ENCODE measurements at regions of chr10 and their contacts with region 1.

Region 1: GRCh38 chr10:115956235-115957011 is 316.6 kb downstream of the GFRA1 start:
- DNase-seq: no peak
- H3K4me3 ChIP-seq: no peak overlapping the region
- H3K27ac ChIP-seq: no peak overlapping the region
- H3K4me1 ChIP-seq: peaks cover 12% of the 10 kb centered on the region
- H3K27me3 ChIP-seq: no peaks in the 10 kb centered on the region
- CTCF ChIP-seq: no peak
- POLR2A ChIP-seq: no peak

Region 2: GRCh38 chr10:115879372-115880044 is 76.9 kb before region 1 on chr10:
- CTCF ChIA-PET with region 1: no interaction called
- POLR2A ChIA-PET with region 1: no interaction called
- dilution Hi-C with region 1: no loop called
- intact Hi-C with region 1: no loop called
- DNase-seq: no peak
- H3K4me3 ChIP-seq: no peak overlapping the region
- H3K27ac ChIP-seq: no peak overlapping the region
- H3K4me1 ChIP-seq: no peaks in the 10 kb centered on the region
- H3K27me3 ChIP-seq: no peaks in the 10 kb centered on the region
- CTCF ChIP-seq: no peak
- POLR2A ChIP-seq: no peak

Region 3: DNA sequence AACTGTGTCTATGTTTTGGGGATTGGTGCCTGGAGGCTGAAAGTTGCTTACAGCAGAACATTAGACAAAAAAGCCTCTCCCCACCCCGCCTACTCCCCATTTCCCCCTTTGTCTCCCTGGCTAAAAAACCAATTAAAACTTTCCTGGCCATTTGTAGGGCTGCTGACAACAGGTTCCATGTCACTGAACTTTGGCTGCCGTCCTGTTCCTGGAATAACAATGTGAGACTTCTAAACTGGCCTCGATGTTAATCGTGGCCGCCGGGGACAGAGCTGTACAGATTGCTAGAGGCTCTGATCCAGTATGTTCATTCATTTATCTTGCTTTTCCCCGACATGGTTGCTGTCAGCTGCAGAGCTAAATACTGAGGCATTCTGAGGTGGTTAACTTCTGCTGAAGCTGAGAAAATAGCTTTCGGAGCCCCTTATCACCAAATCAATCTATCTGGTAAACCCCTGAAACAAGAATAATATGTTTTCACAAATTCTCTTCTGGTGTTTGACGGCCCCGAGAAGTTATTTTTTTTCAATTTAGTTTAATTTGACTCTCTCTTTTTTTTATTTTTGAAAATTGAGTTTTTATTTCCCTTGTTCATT is 44.9 kb after region 1 on chr10:
- CTCF ChIA-PET with region 1: no interaction called
- POLR2A ChIA-PET with region 1: interaction called, 12 read pairs
- dilution Hi-C with region 1: no loop called
- intact Hi-C with region 1: no loop called
- DNase-seq: no peak
- H3K4me3 ChIP-seq: no peak overlapping the region
- H3K27ac ChIP-seq: no peak overlapping the region
- H3K4me1 ChIP-seq: no peaks in the 10 kb centered on the region
- H3K27me3 ChIP-seq: no peaks in the 10 kb centered on the region
- CTCF ChIP-seq: no peak
- POLR2A ChIP-seq: no peak

Region 4: DNA sequence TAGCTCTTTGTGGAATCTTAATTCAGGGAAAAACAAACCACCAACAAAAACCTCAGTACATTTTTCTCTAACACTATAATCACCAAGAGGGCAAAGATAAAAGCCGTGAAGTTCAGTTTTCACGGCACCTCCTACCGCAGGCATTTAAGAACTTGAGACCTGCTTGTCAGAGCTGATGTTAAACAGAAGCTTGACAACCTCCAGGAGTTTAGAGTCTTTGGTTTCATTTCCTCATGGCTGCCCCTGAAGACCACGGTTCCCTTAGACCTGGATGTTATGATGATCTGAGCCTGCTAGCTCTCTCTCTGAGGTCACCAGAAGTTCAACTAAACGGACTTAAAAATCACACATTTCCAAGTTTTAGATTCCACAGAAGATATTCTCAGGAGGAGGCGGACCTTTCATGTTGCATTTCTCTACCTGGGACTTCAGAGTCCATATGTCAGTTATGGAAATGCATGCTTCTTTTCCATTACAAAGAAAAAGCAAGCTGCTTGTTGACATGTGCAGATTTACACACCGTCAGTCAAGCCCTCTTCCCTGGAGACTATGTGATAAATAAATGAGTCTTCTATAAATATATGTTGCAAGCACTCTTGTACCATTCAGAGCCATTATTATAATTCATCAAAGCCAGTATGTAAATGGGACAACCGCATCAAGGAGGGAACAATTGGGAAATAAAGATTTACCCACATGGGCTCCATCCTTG is 58.6 kb after region 1 on chr10:
- CTCF ChIA-PET with region 1: no interaction called
- POLR2A ChIA-PET with region 1: no interaction called
- dilution Hi-C with region 1: no loop called
- intact Hi-C with region 1: no loop called
- DNase-seq: no peak
- H3K4me3 ChIP-seq: no peak overlapping the region
- H3K27ac ChIP-seq: no peak overlapping the region
- H3K4me1 ChIP-seq: no peaks in the 10 kb centered on the region
- H3K27me3 ChIP-seq: no peaks in the 10 kb centered on the region
- CTCF ChIP-seq: no peak
- POLR2A ChIP-seq: no peak

Region 5: GRCh38 chr10:116132780-116133399 is 176.5 kb after region 1 on chr10:
- CTCF ChIA-PET with region 1: no interaction called
- POLR2A ChIA-PET with region 1: no interaction called
- dilution Hi-C with region 1: no loop called
- intact Hi-C with region 1: no loop called
- DNase-seq: no peak
- H3K4me3 ChIP-seq: no peak overlapping the region
- H3K27ac ChIP-seq: no peak overlapping the region
- H3K4me1 ChIP-seq: no peaks in the 10 kb centered on the region
- H3K27me3 ChIP-seq: no peaks in the 10 kb centered on the region
- CTCF ChIP-seq: no peak
- POLR2A ChIP-seq: no peak

Region 6: DNA sequence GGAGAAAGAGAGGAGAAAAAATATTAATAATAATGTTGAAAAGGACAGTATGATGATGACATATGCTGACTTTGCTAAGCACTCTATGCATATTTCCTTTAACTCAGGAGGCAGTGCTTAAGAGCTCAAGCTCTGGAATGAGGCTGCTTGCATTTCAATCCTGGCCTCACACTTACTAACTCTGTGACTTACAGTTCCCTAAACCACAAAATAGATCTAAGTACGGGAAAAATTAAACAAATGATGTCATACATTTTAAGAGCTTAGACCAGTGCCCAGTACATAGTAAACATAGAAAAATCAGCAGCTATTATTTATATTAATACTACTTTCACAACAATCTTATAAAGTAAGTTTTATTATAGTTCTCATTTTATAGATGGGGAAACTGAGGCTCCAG is 255.3 kb after region 1 on chr10:
- CTCF ChIA-PET with region 1: no interaction called
- POLR2A ChIA-PET with region 1: no interaction called
- dilution Hi-C with region 1: no loop called
- intact Hi-C with region 1: no loop called
- DNase-seq: no peak
- H3K4me3 ChIP-seq: no peak overlapping the region
- H3K27ac ChIP-seq: no peak overlapping the region
- H3K4me1 ChIP-seq: no peaks in the 10 kb centered on the region
- H3K27me3 ChIP-seq: no peaks in the 10 kb centered on the region
- CTCF ChIP-seq: no peak
- POLR2A ChIP-seq: no peak